WTC11 (cell line): ENCODE measurements at regions of chr17 and their contacts with region 1.

Region 1: DNA sequence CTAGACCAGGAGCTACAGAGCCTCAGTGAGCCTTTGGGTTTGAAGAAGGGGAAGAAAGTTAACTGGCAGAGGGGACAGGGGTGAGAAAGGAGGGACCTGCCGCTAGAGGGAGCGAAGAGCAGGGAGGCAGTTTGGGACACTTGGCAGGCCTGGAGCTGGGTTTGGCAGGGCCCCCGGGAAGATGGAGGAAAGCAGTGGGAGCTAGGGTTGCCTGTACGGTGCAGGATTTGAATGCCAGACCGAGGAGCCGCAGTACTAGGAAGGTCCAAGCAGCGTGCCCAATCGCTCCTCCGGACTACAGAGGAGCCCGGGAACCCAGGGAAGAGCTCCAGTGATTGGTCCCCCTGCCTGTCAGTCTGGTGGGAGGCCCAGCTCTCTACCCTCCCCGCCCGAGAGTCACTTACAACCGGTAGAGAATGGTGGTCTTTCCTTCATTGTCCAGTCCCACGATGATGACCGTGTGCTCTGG is 1.3 kb downstream of the ARL5C start:
- DNase-seq: peak; percentile 93
- ATAC-seq: peak; percentile 96
- H3K4me3 Mint-ChIP-seq: peak overlapping the region; percentile 94
- H3K27ac Mint-ChIP-seq: peak overlapping the region; percentile 70
- H3K4me1 Mint-ChIP-seq: peaks cover 21% of the 10 kb centered on the region
- H3K27me3 Mint-ChIP-seq: peaks cover 47% of the 10 kb centered on the region
- CTCF ChIP-seq: peak; percentile 53; the same call in 1 of the 2 replicates

Region 2: GRCh38 chr17:38967290-38967738 is 197.4 kb before region 1 on chr17 and contains the start of gene FBXO47:
- CTCF ChIA-PET with region 1: interaction called, 19 read pairs
- POLR2A ChIA-PET with region 1: no interaction called
- DNase-seq: peak; percentile 96
- ATAC-seq: peak; percentile 98
- H3K4me3 Mint-ChIP-seq: peak within 1 kb of the TSS; percentile 67
- H3K27ac Mint-ChIP-seq: peak within 1 kb of the TSS; percentile 89
- H3K4me1 Mint-ChIP-seq: peaks cover 14% of the 10 kb centered on the region
- H3K27me3 Mint-ChIP-seq: no peaks in the 10 kb centered on the region; the same call in 1 of the 2 replicates
- CTCF ChIP-seq: no peak
- total RNA-seq, gene FBXO47: not detected in 3 replicates

Region 3: GRCh38 chr17:39144416-39144840 is 20.3 kb before region 1 on chr17:
- CTCF ChIA-PET with region 1: interaction called, 18 read pairs
- POLR2A ChIA-PET with region 1: no interaction called
- DNase-seq: no peak
- ATAC-seq: no peak
- H3K4me3 Mint-ChIP-seq: no peak overlapping the region
- H3K27ac Mint-ChIP-seq: no peak overlapping the region
- H3K4me1 Mint-ChIP-seq: peaks cover 4% of the 10 kb centered on the region; the same call in 1 of the 2 replicates
- H3K27me3 Mint-ChIP-seq: peaks cover 7% of the 10 kb centered on the region
- CTCF ChIP-seq: no peak

Region 4: DNA sequence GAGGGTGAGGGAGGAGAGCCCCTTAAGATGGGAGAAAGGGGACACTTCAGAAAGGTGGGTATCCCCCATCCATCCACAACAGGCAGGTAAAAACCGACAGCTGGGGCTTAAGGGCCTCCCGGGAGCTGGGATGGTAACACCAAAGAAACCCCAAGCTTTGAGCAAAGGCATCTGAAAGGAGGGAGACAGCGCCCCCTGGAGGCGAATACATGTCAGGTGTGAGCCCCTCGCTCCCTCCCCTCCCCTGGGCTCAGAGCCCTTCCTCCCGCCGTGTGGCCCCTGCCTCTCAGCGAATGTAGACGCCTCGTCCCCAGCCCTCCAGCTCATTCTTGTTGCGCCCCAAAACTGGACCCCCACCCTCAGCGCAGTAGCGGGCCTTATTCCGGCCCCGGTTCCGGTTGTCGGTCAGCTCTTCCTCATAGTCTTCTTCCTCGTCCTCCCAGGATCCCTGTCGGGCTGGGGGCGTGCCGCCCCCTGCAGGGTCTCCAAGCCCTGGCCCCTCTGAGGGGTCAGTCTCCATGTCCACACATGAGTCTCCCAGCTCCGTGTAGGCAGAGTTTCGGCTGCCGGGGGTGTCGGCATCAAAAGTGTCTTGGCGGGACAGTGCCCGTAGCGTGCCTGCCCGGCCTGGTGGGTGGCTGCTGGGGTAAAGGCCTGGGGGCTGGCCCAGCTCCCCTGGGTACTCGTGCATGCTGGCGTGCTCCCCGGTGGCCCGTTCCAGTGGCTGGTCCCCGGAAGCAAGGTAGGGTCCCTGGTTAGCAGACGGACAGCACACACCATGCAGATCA is 10.4 kb after region 1 on chr17:
- CTCF ChIA-PET with region 1: interaction called, 284 read pairs
- POLR2A ChIA-PET with region 1: interaction called, 21 read pairs
- DNase-seq: peak; percentile 92
- ATAC-seq: peak; percentile 53
- H3K4me3 Mint-ChIP-seq: peak overlapping the region; percentile 39
- H3K27ac Mint-ChIP-seq: peak overlapping the region; percentile 32; the same call in 1 of the 2 replicates
- H3K4me1 Mint-ChIP-seq: peaks cover 41% of the 10 kb centered on the region
- H3K27me3 Mint-ChIP-seq: peaks cover 12% of the 10 kb centered on the region
- CTCF ChIP-seq: peak; percentile 98

Region 5: GRCh38 chr17:39199820-39200069 is 35.0 kb after region 1 on chr17:
- CTCF ChIA-PET with region 1: interaction called, 47 read pairs
- POLR2A ChIA-PET with region 1: interaction called, 6 read pairs
- DNase-seq: peak; percentile 83
- ATAC-seq: peak; percentile 25
- H3K4me3 Mint-ChIP-seq: peak overlapping the region; percentile 98
- H3K27ac Mint-ChIP-seq: peak overlapping the region; percentile 100
- H3K4me1 Mint-ChIP-seq: peaks cover 48% of the 10 kb centered on the region
- H3K27me3 Mint-ChIP-seq: no peaks in the 10 kb centered on the region; the same call in 1 of the 2 replicates
- CTCF ChIP-seq: no peak

Region 6: DNA sequence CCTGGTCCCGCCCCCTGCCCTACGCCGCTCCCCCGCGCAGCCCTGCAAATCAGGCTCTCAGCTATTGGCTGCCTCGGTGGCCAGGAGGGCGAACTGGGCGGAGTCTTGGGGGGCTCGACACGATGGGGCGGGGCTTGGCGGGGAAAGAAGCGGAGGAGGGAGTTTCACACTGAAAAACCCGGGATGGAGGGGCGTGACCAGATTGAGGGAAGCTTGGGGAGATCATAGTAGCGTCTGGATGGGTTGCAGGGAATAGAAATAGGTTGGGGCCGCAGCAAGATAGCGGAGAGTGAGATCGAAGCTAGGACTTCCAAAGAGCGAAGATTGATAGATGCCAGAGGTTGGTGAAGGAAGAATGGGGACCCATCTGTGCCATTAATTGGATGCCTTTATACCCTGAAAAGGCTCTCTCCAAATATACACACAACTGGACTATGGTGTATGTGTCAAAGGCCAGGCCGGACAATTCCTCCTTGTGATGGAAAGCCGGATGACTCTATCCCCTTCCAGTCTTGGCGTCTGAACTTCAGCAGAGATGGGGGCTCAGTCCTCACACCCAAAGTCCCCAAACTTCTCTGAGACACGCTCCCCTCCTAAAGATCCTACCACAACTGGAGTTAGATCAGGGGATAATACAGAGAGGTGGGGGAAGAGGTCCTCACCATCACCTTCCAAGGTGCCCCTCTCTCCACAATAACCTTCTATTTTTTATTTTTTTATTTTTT is 61.4 kb after region 1 on chr17:
- CTCF ChIA-PET with region 1: interaction called, 26 read pairs
- POLR2A ChIA-PET with region 1: interaction called, 3 read pairs
- DNase-seq: peak; percentile 98
- ATAC-seq: peak; percentile 96
- H3K4me3 Mint-ChIP-seq: peak overlapping the region; percentile 56
- H3K27ac Mint-ChIP-seq: peak overlapping the region; percentile 26; the same call in 1 of the 2 replicates
- H3K4me1 Mint-ChIP-seq: peaks cover 11% of the 10 kb centered on the region
- H3K27me3 Mint-ChIP-seq: peaks cover 45% of the 10 kb centered on the region
- CTCF ChIP-seq: no peak

Region 7: GRCh38 chr17:39244600-39245570 is 80.2 kb after region 1 on chr17:
- CTCF ChIA-PET with region 1: interaction called, 53 read pairs
- POLR2A ChIA-PET with region 1: interaction called, 3 read pairs
- DNase-seq: peak; percentile 98
- ATAC-seq: peak; percentile 92
- H3K4me3 Mint-ChIP-seq: no peak overlapping the region
- H3K27ac Mint-ChIP-seq: no peak overlapping the region
- H3K4me1 Mint-ChIP-seq: peaks cover 22% of the 10 kb centered on the region
- H3K27me3 Mint-ChIP-seq: no peaks in the 10 kb centered on the region; the same call in 1 of the 2 replicates
- CTCF ChIP-seq: peak; percentile 94